IMR-90 (cell line): ENCODE measurements at regions of chr16 and their contacts with region 1.

Region 1: GRCh38 chr16:84062734-84063640 is 20.4 kb upstream of the SLC38A8 start:
- DNase-seq: peak; percentile 74
- ATAC-seq: peak; percentile 99
- H3K4me3 ChIP-seq: no peak overlapping the region
- H3K27ac ChIP-seq: no peak overlapping the region
- H3K4me1 ChIP-seq: peaks cover 1% of the 10 kb centered on the region; the same call in 1 of the 2 replicates
- H3K27me3 ChIP-seq: no peaks in the 10 kb centered on the region
- CTCF ChIP-seq: peak; percentile 92
- POLR2A ChIP-seq: no peak
- RAD21 ChIP-seq: peak; percentile 72

Region 2: GRCh38 chr16:83826146-83826913 is 236.7 kb before region 1 on chr16:
- CTCF ChIA-PET with region 1: no interaction called
- POLR2A ChIA-PET with region 1: no interaction called
- dilution Hi-C with region 1: no loop called
- in situ Hi-C with region 1: no loop called
- intact Hi-C with region 1: loop called (anchors 2 kb)
- DNase-seq: peak; percentile 78
- ATAC-seq: peak; percentile 95
- H3K4me3 ChIP-seq: no peak overlapping the region
- H3K27ac ChIP-seq: no peak overlapping the region
- H3K4me1 ChIP-seq: peaks cover 4% of the 10 kb centered on the region
- H3K27me3 ChIP-seq: peaks cover 5% of the 10 kb centered on the region
- CTCF ChIP-seq: peak; percentile 91
- POLR2A ChIP-seq: no peak
- RAD21 ChIP-seq: peak; percentile 93

Region 3: GRCh38 chr16:83926726-83927397 is 136.1 kb before region 1 on chr16:
- CTCF ChIA-PET with region 1: no interaction called
- POLR2A ChIA-PET with region 1: no interaction called
- dilution Hi-C with region 1: no loop called
- in situ Hi-C with region 1: no loop called
- intact Hi-C with region 1: loop called (anchors 1 kb)
- DNase-seq: peak; percentile 65
- ATAC-seq: peak; percentile 92
- H3K4me3 ChIP-seq: no peak overlapping the region
- H3K27ac ChIP-seq: no peak overlapping the region
- H3K4me1 ChIP-seq: peaks cover 5% of the 10 kb centered on the region
- H3K27me3 ChIP-seq: no peaks in the 10 kb centered on the region
- CTCF ChIP-seq: peak; percentile 96
- POLR2A ChIP-seq: no peak
- RAD21 ChIP-seq: peak; percentile 82

Region 4: GRCh38 chr16:83952940-83953795 is 109.8 kb before region 1 on chr16 and contains the start of gene OSGIN1:
- CTCF ChIA-PET with region 1: interaction called, 6 read pairs
- POLR2A ChIA-PET with region 1: no interaction called
- dilution Hi-C with region 1: no loop called
- in situ Hi-C with region 1: no loop called
- intact Hi-C with region 1: loop called (anchors 1 kb)
- DNase-seq: peak; percentile 93
- ATAC-seq: peak; percentile 86
- H3K4me3 ChIP-seq: peak within 1 kb of the TSS; percentile 54
- H3K27ac ChIP-seq: peak within 1 kb of the TSS; percentile 79
- H3K4me1 ChIP-seq: peaks cover 14% of the 10 kb centered on the region
- H3K27me3 ChIP-seq: no peaks in the 10 kb centered on the region
- CTCF ChIP-seq: no peak
- POLR2A ChIP-seq: peak; percentile 94
- RAD21 ChIP-seq: no peak
- total RNA-seq, gene OSGIN1: 0.83 and 0.90 TPM in 2 replicates

Region 5: DNA sequence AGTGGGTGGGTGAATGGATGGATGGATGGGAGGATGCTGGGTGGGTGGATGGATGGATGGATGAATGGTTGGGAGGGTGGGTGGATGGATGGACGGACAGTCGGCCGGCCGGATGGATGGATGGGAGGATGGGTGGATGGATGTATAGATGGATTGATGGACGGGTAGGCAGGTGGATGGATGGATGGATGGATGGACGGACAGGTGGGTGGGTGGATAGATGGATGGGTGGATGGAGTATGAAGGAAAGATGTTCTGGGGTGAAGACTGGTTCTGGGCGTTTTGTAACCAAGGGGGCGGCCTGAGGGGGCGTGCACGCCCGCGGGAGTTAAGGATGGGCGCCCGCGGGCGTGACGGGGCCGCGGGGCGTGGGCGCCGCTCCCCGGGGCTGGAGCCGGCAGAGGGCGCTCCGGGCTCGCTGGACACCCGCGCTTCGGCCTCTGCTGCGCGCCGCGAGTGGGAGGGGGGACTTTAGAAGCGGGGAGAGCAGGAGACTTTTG is 95.1 kb before region 1 on chr16 and contains the start of gene NECAB2:
- CTCF ChIA-PET with region 1: interaction called, 5 read pairs
- POLR2A ChIA-PET with region 1: no interaction called
- dilution Hi-C with region 1: no loop called
- in situ Hi-C with region 1: no loop called
- intact Hi-C with region 1: loop called (anchors 1 kb)
- DNase-seq: peak; percentile 8
- ATAC-seq: peak; percentile 90
- H3K4me3 ChIP-seq: peak within 1 kb of the TSS; percentile 16; the same call in 1 of the 2 replicates
- H3K27ac ChIP-seq: no peak within 1 kb of the TSS
- H3K4me1 ChIP-seq: no peaks in the 10 kb centered on the region
- H3K27me3 ChIP-seq: peaks cover 25% of the 10 kb centered on the region
- CTCF ChIP-seq: peak; percentile 73
- POLR2A ChIP-seq: no peak
- RAD21 ChIP-seq: peak; percentile 84
- total RNA-seq, gene NECAB2: under 0.01 TPM in 1 of 2 replicates, not detected in the other

Region 6: DNA sequence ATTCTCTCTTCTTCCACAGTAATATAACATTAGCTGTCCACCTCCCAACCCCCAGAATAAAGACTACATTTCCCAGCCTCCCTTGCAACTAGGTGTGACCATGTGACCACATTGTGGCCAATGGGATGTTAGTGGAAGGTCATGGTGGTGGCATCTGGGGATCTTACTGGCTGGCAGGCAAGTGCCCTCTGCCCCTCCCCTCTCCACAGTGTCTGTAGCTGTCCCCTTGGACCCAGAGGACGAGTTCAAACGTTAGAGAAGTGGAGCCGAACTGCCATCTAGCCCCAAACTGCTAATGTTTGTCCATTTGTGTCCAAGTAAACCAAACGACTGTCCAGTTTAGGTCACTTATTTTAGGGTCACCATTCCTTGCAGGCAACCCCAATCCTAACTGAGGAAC is 203.5 kb after region 1 on chr16:
- CTCF ChIA-PET with region 1: interaction called, 10 read pairs
- POLR2A ChIA-PET with region 1: no interaction called
- dilution Hi-C with region 1: no loop called
- in situ Hi-C with region 1: no loop called
- intact Hi-C with region 1: no loop called
- DNase-seq: peak; percentile 47
- ATAC-seq: peak; percentile 96
- H3K4me3 ChIP-seq: no peak overlapping the region
- H3K27ac ChIP-seq: no peak overlapping the region
- H3K4me1 ChIP-seq: no peaks in the 10 kb centered on the region
- H3K27me3 ChIP-seq: peaks cover 40% of the 10 kb centered on the region
- CTCF ChIP-seq: no peak
- POLR2A ChIP-seq: no peak
- RAD21 ChIP-seq: no peak